ENCODE measurements at regions of chr10 and their contacts with region 1.

Region 1: GRCh38 chr10:15824498-15824897 is 35.8 kb downstream of the MINDY3 start:
- DNase-seq: no peak

Region 2: DNA sequence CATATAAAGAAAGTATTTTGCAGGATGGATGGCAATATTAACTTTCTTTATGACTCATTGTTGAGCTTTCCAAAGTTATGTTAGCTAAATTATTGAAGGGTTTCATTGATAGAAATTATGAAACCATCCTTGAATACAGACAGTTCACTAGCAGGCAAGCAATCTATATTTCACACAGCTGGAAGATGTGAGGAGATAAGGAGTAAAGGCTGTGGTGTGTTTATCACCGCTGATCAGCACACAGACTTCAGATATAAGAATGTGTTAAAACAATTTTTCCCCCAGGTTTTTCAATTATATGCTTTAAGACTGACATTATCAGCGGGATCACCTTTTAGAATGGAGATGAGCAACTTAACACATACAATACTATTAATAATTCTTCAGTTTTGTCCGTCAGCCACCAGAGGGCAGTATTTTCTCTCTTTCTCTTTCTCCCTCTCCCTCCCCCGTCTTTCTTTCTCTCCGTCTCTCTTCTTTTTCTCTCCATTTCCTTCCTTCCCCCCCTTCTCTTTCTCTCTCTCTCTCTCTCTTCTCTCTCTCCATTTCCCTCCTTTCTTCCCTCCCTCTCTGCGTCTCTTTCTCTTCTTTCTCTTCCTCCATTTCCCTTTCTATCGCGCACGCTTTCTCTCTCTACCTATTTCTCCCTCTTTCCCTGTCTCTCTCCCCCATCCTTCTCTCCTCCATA is 390.5 kb before region 1 on chr10:
- intact Hi-C with region 1: loop called (anchors 10 kb)
- DNase-seq: peak in 19 of 42 donors; percentile 26 to 81 (median 54)

Region 3: DNA sequence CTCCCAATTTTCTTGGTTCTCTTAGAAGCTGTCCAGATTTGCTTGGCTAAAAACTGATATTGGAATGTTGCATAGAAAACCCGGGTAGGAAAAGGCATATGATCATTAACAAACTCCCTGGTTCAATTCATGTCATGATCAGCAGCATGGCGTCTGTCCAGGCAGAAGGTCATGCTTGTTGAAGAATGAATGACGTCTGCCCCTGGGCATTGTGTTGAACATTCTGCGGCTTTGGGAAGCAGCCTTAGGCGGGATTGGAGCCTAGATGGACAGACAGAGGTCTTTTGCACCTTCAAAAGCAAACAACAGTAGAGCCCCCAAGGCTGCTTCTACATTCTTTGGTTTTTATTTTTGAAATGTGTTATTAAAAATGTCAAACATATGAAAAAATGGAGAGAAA is 43.5 kb after region 1 on chr10:
- intact Hi-C with region 1: no loop called
- DNase-seq: no peak

Measured in head of caudate nucleus (tissue), 42 donors.